ENCODE measurements at regions of chr16 and their contacts with region 1.

Region 1: GRCh38 chr16:81715358-81716196 is 63.5 kb upstream of the PLCG2 start:
- DNase-seq: no peak
- ATAC-seq: peak; percentile 67
- H3K4me3 Mint-ChIP-seq: peak overlapping the region; percentile 75
- H3K27ac Mint-ChIP-seq: peak overlapping the region; percentile 89
- H3K4me1 Mint-ChIP-seq: peaks cover 49% of the 10 kb centered on the region
- H3K27me3 Mint-ChIP-seq: no peaks in the 10 kb centered on the region
- CTCF ChIP-seq: no peak

Region 2: DNA sequence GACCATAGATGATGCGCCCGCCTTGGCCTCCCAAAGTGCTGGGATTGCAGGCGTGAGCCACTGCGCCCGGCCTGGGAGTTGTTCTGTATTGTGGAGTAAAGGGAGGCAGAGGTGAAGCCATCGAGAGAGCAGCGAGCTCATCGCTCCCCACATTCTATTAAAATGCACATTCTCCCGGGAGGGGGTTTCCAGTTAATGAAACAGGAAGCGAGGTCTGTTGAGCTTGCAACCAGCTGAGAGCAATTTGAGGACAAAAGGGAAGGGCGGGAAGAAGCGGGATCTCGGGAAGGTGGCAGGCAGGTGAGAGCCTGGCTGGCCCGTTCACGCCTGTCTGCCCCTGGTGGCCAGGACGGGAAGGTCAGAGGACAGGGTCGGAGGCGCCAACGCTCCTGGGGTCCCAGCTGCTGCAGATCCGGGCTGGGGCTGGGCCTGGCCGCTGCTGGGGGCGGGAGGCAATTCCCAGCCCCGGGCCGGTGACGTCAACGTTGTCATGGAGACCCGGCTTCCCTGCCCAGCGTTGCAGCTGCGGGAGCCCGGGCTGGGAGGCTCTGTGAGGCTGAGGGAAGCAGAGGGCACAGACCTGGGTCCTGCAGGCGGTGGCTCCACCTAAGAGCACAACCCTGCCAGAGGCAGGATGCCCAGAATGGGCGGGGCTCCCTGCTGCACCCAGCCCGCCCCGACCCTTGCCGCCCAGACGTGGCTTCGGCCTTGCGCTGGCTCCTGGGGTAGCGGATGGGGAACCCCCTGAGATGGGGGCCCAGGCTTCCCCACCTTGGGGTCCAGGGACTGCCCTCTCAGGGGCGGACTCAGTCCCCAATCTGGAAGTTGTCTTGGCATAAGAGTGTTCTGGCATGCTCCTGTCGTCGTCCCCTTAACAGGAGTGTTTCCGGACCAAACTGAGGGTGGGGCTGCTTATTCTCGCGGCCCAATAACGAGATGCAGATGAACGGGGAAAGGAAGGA is 14.8 kb after region 1 on chr16:
- CTCF ChIA-PET with region 1: interaction called, 5 read pairs
- POLR2A ChIA-PET with region 1: interaction called, 8 read pairs
- intact Hi-C with region 1: loop called (anchors 1 kb)
- DNase-seq: peak; percentile 65
- ATAC-seq: peak; percentile 95
- H3K4me3 Mint-ChIP-seq: peak overlapping the region; percentile 85
- H3K27ac Mint-ChIP-seq: peak overlapping the region; percentile 86
- H3K4me1 Mint-ChIP-seq: peaks cover 31% of the 10 kb centered on the region
- H3K27me3 Mint-ChIP-seq: no peaks in the 10 kb centered on the region
- CTCF ChIP-seq: no peak